AG04450 (cell line): ENCODE measurements at regions of chr1 and their contacts with region 1.

Region 1: DNA sequence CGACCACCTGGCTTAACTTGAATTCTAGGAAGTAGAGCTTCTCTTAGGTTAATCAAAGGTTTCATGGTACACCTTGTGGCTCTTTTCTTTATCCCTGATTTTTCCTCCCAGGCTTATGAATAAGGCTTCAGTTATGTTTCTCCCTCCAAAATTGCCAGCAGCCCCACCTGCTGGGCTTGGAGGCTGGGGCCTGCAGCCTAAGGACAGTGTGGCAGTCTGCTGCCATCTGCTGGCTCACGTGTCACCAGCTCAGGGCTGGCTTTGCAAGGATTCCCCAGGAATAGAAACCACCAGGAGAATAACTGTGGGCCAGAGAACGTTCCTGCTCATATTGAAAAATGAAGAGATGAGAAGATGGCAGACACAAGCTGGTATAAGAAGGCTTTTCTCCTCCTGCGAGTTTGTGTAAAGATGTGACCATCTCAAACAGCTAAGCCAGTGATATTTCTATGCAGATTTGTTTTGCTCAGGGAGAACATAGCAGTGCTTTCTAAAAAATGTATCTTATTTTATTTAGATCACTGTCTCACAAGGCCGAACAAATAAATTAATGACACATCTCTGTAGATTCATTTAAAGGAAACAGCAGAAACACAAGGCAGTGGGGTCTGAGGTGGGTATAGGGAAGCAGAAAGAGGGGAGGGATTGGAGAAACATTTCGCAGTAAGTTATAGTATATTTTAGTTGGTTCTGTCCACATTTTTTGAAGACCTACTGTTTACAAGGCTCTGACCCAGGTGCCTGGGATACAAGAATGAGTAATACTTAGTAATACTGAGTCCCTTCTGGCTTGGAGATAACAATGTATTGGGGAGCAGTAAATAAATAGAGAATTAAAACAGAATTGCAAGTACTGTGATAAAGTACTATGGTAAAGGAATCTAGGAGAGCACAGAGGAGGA is 291.1 kb upstream of the SGIP1 start:
- DNase-seq: peak; percentile 71
- H3K4me3 ChIP-seq: no peak overlapping the region
- H3K27ac ChIP-seq: no peak overlapping the region
- H3K27me3 ChIP-seq: no peaks in the 10 kb centered on the region
- CTCF ChIP-seq: peak; percentile 100

Region 2: DNA sequence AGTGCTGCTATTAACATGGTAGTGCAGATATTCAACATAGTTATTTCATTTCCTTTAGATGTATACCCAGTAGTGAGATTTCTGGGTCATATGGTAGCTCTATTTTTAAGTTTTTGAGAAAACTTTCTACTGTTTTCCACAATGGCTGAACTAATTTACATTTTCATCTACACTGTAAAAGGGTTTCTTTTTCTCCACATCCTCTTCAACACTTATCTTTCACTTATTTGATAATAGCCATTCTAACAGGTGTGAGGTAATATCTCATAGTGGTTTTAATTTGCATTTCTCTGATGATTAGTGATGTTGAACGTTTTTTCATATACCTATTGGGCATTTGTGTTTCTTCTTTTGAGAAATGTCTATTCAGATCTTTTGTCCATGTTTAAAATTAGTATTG is 300.4 kb before region 1 on chr1:
- CTCF ChIA-PET with region 1: interaction called, 13 read pairs
- POLR2A ChIA-PET with region 1: no interaction called
- DNase-seq: no peak
- H3K4me3 ChIP-seq: no peak overlapping the region
- H3K27ac ChIP-seq: no peak overlapping the region
- H3K27me3 ChIP-seq: no peaks in the 10 kb centered on the region
- CTCF ChIP-seq: no peak

Region 3: GRCh38 chr1:65971547-65971946 is 271.4 kb before region 1 on chr1:
- CTCF ChIA-PET with region 1: interaction called, 291 read pairs
- POLR2A ChIA-PET with region 1: no interaction called
- DNase-seq: no peak
- H3K4me3 ChIP-seq: no peak overlapping the region
- H3K27ac ChIP-seq: no peak overlapping the region
- H3K27me3 ChIP-seq: no peaks in the 10 kb centered on the region
- CTCF ChIP-seq: no peak

Region 4: DNA sequence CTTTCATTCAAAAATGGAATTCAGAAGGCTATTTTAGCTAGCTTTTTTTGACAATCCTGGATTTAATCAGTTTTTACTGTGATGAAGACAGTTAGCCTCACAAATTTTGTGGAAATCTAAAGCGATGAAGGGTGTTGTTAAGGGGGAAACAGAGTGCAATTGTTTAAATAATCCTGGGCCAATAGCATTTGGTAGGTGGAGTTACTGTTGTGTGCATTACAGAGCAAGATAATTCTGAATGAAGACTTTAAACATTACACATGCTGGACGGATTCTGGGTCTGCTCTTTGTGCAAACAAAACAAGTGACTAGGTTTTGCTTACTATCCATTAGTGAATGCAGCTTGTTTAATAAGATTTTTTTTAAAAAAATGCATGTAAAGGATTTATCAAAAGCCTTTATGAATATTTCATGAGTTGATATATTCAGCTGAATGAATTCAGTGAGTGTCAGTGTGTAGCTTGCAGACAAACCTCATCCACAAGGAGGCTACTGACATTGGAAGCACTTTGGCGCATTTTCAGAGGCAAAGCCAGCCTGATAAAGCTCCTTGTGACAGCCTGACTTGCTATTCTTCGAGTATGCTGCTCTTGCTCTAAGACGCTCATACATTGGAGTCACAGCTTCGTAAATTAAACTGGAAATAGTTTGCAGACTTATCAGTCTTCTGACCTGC is 250.6 kb before region 1 on chr1:
- CTCF ChIA-PET with region 1: interaction called, 10 read pairs
- POLR2A ChIA-PET with region 1: no interaction called
- DNase-seq: no peak
- H3K4me3 ChIP-seq: no peak overlapping the region
- H3K27ac ChIP-seq: no peak overlapping the region
- H3K27me3 ChIP-seq: no peaks in the 10 kb centered on the region
- CTCF ChIP-seq: 0 out of 2 replicates have a peak, but pooled peaks have one; percentile 8

Region 5: DNA sequence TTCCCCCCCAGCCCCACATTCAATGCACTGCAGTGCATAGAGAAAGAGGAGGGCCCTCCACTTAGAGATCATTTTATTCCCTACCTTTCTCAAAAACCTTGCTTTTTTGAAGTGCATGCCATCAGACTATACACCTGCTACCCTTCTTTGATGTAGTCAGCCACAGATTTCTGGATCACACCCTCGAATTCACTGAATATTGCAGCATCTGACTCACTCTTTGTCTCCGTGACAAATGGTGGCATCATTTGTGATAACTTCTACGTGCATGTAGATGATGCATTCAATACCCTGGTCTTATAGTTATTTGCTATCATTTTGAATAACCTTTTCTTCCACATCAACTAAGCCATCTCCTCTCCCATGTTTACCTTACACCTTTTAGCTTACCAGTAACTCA is 19.2 kb before region 1 on chr1:
- CTCF ChIA-PET with region 1: interaction called, 18 read pairs
- POLR2A ChIA-PET with region 1: no interaction called
- DNase-seq: no peak
- H3K4me3 ChIP-seq: no peak overlapping the region
- H3K27ac ChIP-seq: no peak overlapping the region
- H3K27me3 ChIP-seq: no peaks in the 10 kb centered on the region
- CTCF ChIP-seq: no peak

Region 6: DNA sequence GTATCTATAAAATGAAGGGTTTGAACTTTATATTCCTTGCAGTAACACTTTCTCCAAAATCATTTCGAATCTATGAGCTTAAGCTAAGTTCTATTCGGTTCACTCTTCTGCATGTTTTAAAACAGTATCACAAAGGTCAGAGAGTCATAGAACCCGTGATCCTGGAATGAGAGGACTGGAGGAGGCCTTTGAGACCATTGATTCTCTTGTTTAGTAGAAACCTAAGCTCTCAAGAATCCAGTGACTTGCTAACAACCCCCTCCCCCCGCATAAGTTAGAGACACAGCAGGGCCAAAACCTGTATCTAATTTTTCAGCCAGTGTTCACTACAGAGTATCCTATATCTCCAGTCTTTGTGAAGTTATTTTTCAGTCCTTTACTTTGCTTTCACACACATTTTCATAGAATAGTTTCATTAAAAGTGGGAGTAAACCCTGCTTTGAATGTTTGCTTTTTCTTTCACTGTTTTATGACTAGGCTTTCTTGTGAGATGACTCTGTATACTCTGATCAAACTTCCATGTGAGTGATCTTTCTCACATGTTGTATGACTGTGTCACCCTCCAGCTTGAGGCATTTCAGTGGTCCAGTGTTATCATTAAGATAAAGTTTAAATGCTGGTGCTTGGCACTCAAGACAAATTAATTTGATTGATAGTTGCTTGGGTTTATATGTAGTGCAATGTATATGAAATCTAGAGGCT is 15.7 kb after region 1 on chr1:
- CTCF ChIA-PET with region 1: interaction called, 36 read pairs
- POLR2A ChIA-PET with region 1: no interaction called
- DNase-seq: no peak
- H3K4me3 ChIP-seq: no peak overlapping the region
- H3K27ac ChIP-seq: no peak overlapping the region
- H3K27me3 ChIP-seq: no peaks in the 10 kb centered on the region
- CTCF ChIP-seq: no peak

Region 7: GRCh38 chr1:66503841-66504470 is 261.1 kb after region 1 on chr1:
- CTCF ChIA-PET with region 1: interaction called, 65 read pairs
- POLR2A ChIA-PET with region 1: no interaction called
- DNase-seq: no peak
- H3K4me3 ChIP-seq: no peak overlapping the region
- H3K27ac ChIP-seq: no peak overlapping the region
- H3K27me3 ChIP-seq: no peaks in the 10 kb centered on the region
- CTCF ChIP-seq: peak; percentile 74